GM10248 (cell line): ENCODE measurements at regions of chr2 and their contacts with region 1.

Region 1: GRCh38 chr2:88059979-88060906 is 4.7 kb upstream of the KRCC1 start:
- DNase-seq: peak; percentile 66
- CTCF ChIP-seq: peak; percentile 72

Region 2: DNA sequence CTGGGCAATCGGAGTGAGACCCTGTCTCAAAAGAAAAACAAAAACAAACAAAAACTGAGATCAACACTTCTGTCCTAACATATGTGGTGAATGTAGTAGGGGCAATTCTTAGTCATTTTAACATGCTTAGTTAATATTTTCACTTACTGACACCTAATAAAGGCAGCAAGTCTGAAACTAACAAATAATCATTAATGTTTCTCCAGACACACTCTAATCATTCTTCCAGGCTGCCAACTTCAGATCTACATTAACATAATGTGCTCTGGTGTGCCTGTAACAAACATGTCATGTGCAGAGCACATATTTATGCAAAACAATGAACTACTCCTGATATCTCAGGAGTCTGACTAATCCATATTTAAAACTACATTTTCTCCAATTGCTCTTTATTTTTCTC is 10.6 kb before region 1 on chr2:
- CTCF ChIA-PET with region 1: interaction called, 72 read pairs
- POLR2A ChIA-PET with region 1: no interaction called
- DNase-seq: no peak
- CTCF ChIP-seq: no peak

Region 3: DNA sequence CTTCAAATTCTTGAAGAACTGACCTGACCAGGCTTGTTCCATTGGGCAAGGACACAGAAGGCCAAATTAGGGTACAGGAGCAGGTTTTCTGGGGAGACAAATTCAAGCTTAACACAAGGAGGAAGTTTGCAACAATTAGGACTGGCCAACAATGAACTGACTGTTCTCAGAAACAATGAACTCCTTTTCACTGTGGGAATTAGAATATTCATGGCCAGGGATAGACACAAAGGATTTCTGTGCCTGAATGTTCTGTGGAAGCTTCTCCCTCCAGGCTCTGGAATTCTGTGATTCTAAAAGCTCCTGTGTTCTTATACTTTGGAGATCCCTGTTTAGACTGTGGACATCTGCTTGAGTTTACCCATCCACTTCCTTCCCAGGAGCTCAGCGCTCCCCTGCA is 22.5 kb after region 1 on chr2:
- CTCF ChIA-PET with region 1: interaction called, 10 read pairs
- POLR2A ChIA-PET with region 1: no interaction called
- DNase-seq: no peak
- CTCF ChIP-seq: no peak

Region 4: DNA sequence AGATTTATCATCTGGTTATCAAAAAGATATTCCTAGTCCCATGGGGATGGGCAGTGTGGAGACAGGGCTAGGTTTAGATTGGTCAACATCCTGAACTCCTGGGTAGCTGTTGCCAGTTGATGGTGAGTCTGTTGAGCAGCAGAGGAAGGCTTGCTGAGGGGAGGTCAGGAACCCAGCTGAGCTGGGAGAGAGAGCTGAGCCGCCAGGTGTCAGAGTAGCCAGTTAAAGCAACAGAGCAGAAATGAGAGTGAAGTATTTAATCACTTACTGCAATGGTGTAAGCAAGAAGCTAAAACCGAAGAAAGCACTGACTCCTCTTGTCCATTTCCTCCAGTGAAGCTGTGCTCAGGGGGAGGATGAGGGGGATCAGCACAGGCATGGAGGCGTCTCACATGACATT is 36.9 kb after region 1 on chr2:
- CTCF ChIA-PET with region 1: interaction called, 12 read pairs
- POLR2A ChIA-PET with region 1: no interaction called
- DNase-seq: no peak
- CTCF ChIP-seq: no peak

Region 5: DNA sequence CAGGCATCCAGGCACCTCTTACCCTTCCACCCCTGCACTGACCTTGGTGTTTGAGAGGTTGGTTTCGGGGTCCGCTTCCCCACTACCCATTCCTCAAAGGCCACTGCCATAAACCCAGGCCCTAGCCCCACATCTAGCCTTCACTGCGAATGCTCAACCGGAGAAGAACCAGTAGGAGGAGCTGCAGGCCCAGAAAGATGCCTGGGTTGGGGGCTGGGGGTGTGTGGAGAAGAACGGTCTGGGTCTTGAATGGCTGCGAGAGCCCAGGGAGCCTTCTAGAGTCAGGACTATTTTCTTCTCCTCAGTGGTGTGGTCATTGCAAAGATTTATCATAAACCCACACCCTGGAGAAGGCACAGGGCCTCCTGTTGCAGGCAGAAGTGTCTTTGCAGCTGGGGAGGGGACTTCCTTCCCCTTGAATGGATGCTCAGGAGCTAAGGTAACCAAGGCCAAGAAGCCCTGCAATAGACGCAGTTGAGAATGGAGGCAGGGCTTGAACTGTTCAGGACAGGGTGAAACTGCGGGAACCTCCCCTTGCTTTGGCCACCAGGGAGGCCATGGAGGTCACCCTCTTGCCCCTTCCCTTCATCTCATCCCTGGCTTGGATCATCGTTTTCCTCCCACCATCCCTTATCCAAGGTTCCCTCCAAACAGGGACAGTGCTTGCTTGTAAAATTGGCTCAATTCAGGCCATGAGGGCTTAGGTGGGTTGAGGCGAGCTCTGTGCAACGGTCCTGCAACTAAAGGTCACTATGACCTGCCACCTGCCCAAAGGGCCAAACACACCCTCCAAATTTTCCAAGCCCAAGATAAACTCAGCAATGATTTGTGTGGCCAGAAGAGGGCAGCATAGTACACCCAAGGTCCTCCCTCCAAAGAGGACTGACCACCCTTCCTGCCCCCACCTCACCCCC is 130.8 kb after region 1 on chr2:
- CTCF ChIA-PET with region 1: interaction called, 26 read pairs
- POLR2A ChIA-PET with region 1: no interaction called
- DNase-seq: peak; percentile 70
- CTCF ChIP-seq: peak; percentile 67